Common myeloid progenitor, CD34-positive (primary cell): ENCODE measurements at regions of chr10 and their contacts with region 1.

Region 1: GRCh38 chr10:111107023-111107422 is 30.2 kb downstream of the ADRA2A start:
- DNase-seq: no peak
- H3K4me3 ChIP-seq: no peak overlapping the region
- H3K27ac ChIP-seq: no peak overlapping the region
- H3K4me1 ChIP-seq: peaks cover 0 to 4% (median 0%) of the 10 kb centered on the region in 4 experiments
- H3K27me3 ChIP-seq: no peaks in the 10 kb centered on the region

Region 2: DNA sequence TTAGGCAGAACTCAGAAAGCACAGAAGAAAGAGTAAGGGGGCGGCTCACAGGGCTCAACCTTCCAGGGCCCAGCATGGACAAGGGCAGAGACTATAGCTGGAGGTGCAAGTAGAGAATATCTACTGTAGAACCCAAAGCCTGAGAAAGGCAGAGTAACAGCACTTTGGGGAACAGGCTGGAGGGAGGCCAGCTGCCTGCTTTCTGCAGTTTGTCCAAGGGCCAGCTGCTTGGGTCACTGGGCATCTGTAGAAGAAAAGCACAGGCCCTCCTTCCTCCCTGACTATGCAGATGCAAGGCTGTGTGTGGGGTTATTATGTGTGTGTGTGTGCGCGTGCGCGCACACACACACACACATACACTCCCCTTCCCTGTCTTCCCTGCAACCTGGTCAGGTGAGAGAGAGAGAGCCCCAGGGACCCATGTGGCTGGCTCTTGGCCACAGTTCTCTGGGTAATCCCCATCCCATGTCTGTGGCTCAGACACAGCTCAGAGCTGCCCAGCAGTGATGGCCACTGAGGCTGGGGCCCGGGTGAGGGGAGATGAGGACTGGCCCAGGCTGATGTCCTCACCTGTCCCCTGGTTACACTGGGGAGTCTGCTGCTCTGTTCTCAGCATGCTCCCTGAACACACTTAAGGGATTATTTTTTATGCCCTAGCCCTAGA is 21.2 kb before region 1 on chr10:
- CTCF ChIA-PET with region 1: interaction called, 10 read pairs
- POLR2A ChIA-PET with region 1: no interaction called
- DNase-seq: no peak
- H3K4me3 ChIP-seq: no peak overlapping the region
- H3K27ac ChIP-seq: no peak overlapping the region
- H3K4me1 ChIP-seq: no peaks in the 10 kb centered on the region
- H3K27me3 ChIP-seq: no peaks in the 10 kb centered on the region